H1 (cell line): ENCODE measurements at regions of chr3 and their contacts with region 1.

Region 1: DNA sequence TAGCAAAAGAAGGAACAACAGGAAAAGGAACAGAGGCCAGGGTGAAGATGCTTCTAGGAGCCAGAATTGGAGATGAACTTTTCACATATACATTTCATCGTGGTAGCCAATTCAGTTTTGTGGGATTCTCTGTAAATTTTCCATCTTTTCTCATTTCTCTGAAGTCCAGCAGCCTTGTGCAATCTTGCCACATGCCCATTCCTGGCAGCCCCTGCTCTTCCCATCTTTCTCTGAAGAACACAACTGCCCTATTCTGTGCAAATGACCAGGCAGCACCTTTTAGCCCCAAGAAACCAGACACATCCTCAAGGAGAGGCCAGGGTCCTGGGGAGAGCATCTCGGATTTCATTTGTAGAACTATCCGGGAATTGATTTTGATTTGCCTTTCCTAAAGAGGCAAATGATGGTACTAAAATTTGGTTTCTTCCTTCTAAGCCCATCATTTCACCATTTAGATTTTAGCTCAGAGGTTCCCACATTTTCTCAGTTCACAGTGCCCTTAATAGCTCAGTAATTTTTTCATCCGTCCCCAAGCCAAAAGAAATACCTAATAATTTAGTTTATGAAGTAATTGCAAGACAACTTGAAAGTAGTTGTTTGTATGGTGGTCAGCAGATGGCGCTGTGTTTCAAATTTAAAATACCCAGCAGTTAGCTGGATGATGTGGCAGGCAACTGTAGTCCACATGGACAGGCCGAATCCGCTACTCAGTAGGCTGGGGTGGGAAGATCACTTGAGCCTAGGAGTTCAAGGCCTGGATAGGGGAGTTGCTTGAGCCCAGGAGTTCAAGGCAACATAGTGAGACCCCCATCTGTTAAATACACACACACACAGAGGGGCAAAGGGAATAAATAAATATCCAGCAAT is 61.3 kb upstream of the ACKR4 start:
- DNase-seq: peak; percentile 17 to 67
- H3K4me3 ChIP-seq: no peak overlapping the region
- H3K27ac ChIP-seq: no peak overlapping the region
- H3K4me1 ChIP-seq: no peaks in the 10 kb centered on the region
- H3K27me3 ChIP-seq: no peaks in the 10 kb centered on the region
- CTCF ChIP-seq: peak in 2 of 3 experiments; percentile 65 to 66; a peak in 3 of 4 replicates
- EP300 ChIP-seq: no peak
- POLR2A ChIP-seq: no peak
- RAD21 ChIP-seq: peak; percentile 69 to 70

Region 2: DNA sequence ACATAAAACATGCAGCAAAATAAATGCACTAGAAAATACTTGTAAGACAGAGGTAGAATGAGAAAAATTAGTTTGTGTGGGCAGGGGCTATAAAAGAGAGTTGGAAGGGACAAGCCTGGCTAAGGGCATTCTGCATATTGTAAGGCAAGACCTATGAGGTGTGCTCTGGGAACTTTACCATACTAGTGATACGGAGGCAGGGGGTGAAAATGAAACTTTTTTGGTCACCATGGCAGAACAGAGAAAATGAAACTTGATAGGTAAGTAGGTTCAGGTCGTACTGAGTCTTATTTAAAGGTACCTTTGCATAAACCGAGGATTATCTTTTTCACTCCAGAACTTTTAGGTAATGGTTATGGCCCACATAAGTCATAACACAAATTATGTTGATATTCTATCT is 13.5 kb before region 1 on chr3:
- CTCF ChIA-PET with region 1: interaction called, 13 read pairs
- POLR2A ChIA-PET with region 1: interaction called, 3 read pairs
- DNase-seq: no peak
- H3K4me3 ChIP-seq: no peak overlapping the region
- H3K27ac ChIP-seq: no peak overlapping the region
- H3K4me1 ChIP-seq: no peaks in the 10 kb centered on the region
- H3K27me3 ChIP-seq: no peaks in the 10 kb centered on the region
- CTCF ChIP-seq: no peak
- EP300 ChIP-seq: no peak
- POLR2A ChIP-seq: no peak
- RAD21 ChIP-seq: no peak

Region 3: GRCh38 chr3:132549890-132550578 is 14.2 kb after region 1 on chr3:
- CTCF ChIA-PET with region 1: interaction called, 102 read pairs
- POLR2A ChIA-PET with region 1: no interaction called
- DNase-seq: no peak
- H3K4me3 ChIP-seq: no peak overlapping the region
- H3K27ac ChIP-seq: no peak overlapping the region
- H3K4me1 ChIP-seq: peaks cover 0 to 12% (median 3%) of the 10 kb centered on the region in 4 experiments; a peak in 3 of 7 replicates
- H3K27me3 ChIP-seq: no peaks in the 10 kb centered on the region
- CTCF ChIP-seq: no peak
- EP300 ChIP-seq: no peak
- POLR2A ChIP-seq: no peak
- RAD21 ChIP-seq: no peak

Region 4: GRCh38 chr3:132629928-132630327 is 94.1 kb after region 1 on chr3:
- CTCF ChIA-PET with region 1: interaction called, 11 read pairs
- POLR2A ChIA-PET with region 1: no interaction called
- DNase-seq: no peak
- H3K4me3 ChIP-seq: no peak overlapping the region
- H3K27ac ChIP-seq: no peak overlapping the region
- H3K4me1 ChIP-seq: no peaks in the 10 kb centered on the region
- H3K27me3 ChIP-seq: no peaks in the 10 kb centered on the region
- CTCF ChIP-seq: no peak
- EP300 ChIP-seq: no peak
- POLR2A ChIP-seq: no peak
- RAD21 ChIP-seq: no peak